Left ventricle myocardium superior (tissue), 1 donor: ENCODE measurements at regions of chr4 and their contacts with region 1.

Region 1: GRCh38 chr4:95556207-95556859 is 7.6 kb upstream of the UNC5C start:
- DNase-seq: no peak
- ATAC-seq: no peak

Region 2: GRCh38 chr4:93802085-93802484 is 1754.2 kb before region 1 on chr4:
- intact Hi-C with region 1: loop called (anchors 5 kb)
- DNase-seq: no peak
- ATAC-seq: no peak

Region 3: DNA sequence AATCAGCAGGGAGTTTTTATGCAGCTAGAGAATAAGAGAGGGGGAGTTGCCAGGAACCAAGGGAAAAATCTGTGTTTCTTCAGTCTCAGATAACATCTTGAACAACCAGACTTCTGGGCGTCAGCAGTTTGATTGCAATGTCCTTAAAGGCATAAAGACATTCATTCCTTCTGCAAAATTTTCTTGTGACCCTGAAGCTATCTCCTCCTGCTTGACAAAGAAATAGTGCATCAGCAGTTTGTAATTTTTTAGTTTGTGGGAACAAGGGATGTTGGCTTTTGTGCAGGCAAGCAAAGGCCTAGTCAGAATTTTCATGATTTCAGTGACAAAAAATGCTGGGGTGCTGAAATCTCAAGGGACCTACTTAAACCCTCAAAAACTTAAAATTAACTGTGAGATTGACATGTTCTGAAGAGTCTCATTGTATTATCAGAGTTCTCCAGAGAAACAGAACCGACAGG is 118.2 kb after region 1 on chr4:
- intact Hi-C with region 1: no loop called
- DNase-seq: no peak
- ATAC-seq: no peak